ENCODE measurements at regions of chr15 and their contacts with region 1.

Region 1: GRCh38 chr15:57751177-57751800 is 44.8 kb downstream of the POLR2M start:
- DNase-seq: no peak
- H3K4me3 ChIP-seq: no peak overlapping the region
- H3K27ac ChIP-seq: no peak overlapping the region
- H3K4me1 ChIP-seq: peaks cover 7% of the 10 kb centered on the region
- H3K27me3 ChIP-seq: no peaks in the 10 kb centered on the region
- CTCF ChIP-seq: peak in 2 of 3 donors; percentile 28 to 36
- EP300 ChIP-seq: no peak
- POLR2A ChIP-seq: no peak

Region 2: DNA sequence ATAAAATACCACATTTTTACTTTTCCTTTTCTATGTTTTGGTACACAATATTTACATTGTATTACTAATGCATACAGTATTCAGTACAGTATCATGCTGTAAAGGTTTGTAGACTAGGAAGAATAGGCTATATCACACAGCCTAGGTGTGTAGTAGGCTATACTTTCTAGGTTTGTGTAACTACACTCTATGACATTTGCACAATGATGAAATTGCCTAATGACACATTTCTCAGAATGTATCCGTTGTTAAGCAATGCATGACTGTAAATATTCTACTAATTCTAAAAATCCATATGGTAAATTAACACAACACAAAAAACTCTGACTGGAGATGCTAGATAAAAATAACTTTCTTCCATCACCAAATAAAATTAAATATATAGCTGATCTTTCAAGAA is 1774.1 kb before region 1 on chr15:
- intact Hi-C with region 1: no loop called
- DNase-seq: no peak
- H3K4me3 ChIP-seq: no peak overlapping the region
- H3K27ac ChIP-seq: no peak overlapping the region
- H3K4me1 ChIP-seq: no peaks in the 10 kb centered on the region
- H3K27me3 ChIP-seq: no peaks in the 10 kb centered on the region
- CTCF ChIP-seq: no peak
- EP300 ChIP-seq: no peak
- POLR2A ChIP-seq: no peak

Region 3: GRCh38 chr15:57866149-57866736 is 115.0 kb after region 1 on chr15:
- intact Hi-C with region 1: loop called in 2 of 4 experiments (anchors 10 kb)
- DNase-seq: peak in 3 of 5 donors; percentile 28 to 60 (median 30)
- H3K4me3 ChIP-seq: no peak overlapping the region
- H3K27ac ChIP-seq: no peak overlapping the region
- H3K4me1 ChIP-seq: no peaks in the 10 kb centered on the region
- H3K27me3 ChIP-seq: no peaks in the 10 kb centered on the region
- CTCF ChIP-seq: no peak
- EP300 ChIP-seq: no peak
- POLR2A ChIP-seq: no peak

Region 4: DNA sequence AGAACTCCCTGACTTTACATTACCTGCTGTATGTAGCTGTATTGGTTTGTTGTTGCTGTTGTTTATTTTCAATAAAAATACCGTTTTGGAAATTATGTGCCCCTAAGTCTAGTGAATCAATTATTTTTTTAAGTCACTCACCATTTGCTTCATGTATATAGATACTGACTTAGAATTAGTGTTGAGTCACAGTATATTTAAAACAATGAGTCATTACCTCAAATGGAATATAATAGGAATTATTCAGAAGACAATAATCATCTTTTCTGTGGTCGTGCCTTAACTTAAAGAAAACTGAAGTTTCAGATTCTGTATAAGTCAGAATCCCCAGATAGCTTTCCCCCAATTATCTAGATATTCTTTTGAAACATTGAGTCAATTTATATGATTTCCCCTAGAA is 335.2 kb after region 1 on chr15:
- intact Hi-C with region 1: loop called in 1 of 4 experiments (anchors 10 kb)
- DNase-seq: no peak
- H3K4me3 ChIP-seq: no peak overlapping the region
- H3K27ac ChIP-seq: no peak overlapping the region
- H3K4me1 ChIP-seq: no peaks in the 10 kb centered on the region
- H3K27me3 ChIP-seq: no peaks in the 10 kb centered on the region
- CTCF ChIP-seq: no peak
- EP300 ChIP-seq: no peak
- POLR2A ChIP-seq: no peak

Region 5: GRCh38 chr15:58182460-58183163 is 431.3 kb after region 1 on chr15:
- intact Hi-C with region 1: loop called in 1 of 4 experiments (anchors 10 kb)
- DNase-seq: peak in 4 of 5 donors; percentile 13 to 52 (median 34)
- H3K4me3 ChIP-seq: no peak overlapping the region
- H3K27ac ChIP-seq: no peak overlapping the region
- H3K4me1 ChIP-seq: no peaks in the 10 kb centered on the region
- H3K27me3 ChIP-seq: no peaks in the 10 kb centered on the region
- CTCF ChIP-seq: peak in 1 of 3 donors; percentile 13
- EP300 ChIP-seq: no peak
- POLR2A ChIP-seq: no peak